GM12878 (cell line): ENCODE measurements at regions of chr2 and their contacts with region 1.

Region 1: GRCh38 chr2:177263451-177264208 is 897 bp downstream of the NFE2L2 start:
- DNase-seq: peak; percentile 71
- ATAC-seq: peak; percentile 74
- H3K4me3 ChIP-seq: peak overlapping the region; percentile 72
- H3K27ac ChIP-seq: peak overlapping the region; percentile 99
- H3K4me1 ChIP-seq: peaks cover 12% of the 10 kb centered on the region
- H3K27me3 ChIP-seq: no peaks in the 10 kb centered on the region
- CTCF ChIP-seq: peak; percentile 85 to 96 (median 86); a peak in 5 of 6 replicates
- EP300 ChIP-seq: peak; percentile 90 to 93
- POLR2A ChIP-seq: peak; percentile 81
- RAD21 ChIP-seq: peak; percentile 62

Region 2: DNA sequence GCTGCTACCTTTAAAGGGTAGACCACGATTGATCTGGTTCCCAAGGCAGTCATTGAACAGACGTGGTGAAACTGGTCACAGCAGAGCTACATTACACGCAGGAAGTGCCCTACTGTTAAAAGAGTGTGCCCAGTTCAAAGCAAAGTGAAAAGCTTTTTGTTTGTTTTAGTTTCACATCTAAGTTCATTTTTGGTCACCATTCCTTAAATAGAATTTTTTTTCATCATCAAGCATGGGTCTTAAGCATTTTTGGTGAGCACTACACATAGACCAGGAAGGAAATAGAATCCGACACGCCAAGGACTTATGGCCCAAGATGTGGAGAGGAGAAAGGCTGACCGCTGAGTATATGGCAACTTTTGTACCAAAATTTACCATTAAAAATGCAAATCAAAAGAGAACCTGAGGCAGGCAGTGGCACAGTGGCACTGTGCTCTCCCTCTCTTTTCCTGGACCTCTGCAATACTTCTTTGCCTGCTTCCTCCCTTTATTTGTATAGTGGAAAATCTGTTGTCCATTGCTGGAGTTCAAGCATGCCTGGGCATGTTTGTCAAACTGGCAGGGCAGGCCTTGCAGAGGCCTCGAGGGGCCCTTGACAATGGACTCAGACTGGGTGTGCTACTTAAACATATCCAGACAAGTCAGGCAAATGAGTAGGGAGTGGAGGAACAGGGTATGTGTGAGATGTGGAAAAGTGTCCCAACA is 93.7 kb before region 1 on chr2:
- CTCF ChIA-PET with region 1: interaction called, 213 read pairs
- POLR2A ChIA-PET with region 1: interaction called, 74 read pairs
- RAD21 ChIA-PET with region 1: interaction called, 166 read pairs
- SMC1A ChIA-PET with region 1: interaction called, 140 read pairs
- in situ Hi-C with region 1: no loop called
- intact Hi-C with region 1: no loop called
- DNase-seq: peak; percentile 82
- ATAC-seq: peak; percentile 81
- H3K4me3 ChIP-seq: peak overlapping the region; percentile 9; the same call in 1 of the 2 replicates
- H3K27ac ChIP-seq: peak overlapping the region; percentile 84
- H3K4me1 ChIP-seq: peaks cover 33% of the 10 kb centered on the region
- H3K27me3 ChIP-seq: no peaks in the 10 kb centered on the region
- CTCF ChIP-seq: no peak
- EP300 ChIP-seq: no peak; a peak in 2 of 4 replicates
- POLR2A ChIP-seq: no peak
- RAD21 ChIP-seq: no peak

Region 3: GRCh38 chr2:177212106-177212890 is 51.3 kb before region 1 on chr2 and contains the start of gene HNRNPA3:
- CTCF ChIA-PET with region 1: interaction called, 8 read pairs
- POLR2A ChIA-PET with region 1: interaction called, 31 read pairs
- RAD21 ChIA-PET with region 1: interaction called, 27 read pairs
- SMC1A ChIA-PET with region 1: interaction called, 9 read pairs
- in situ Hi-C with region 1: no loop called
- intact Hi-C with region 1: loop called (anchors 1 kb)
- DNase-seq: peak; percentile 95
- ATAC-seq: peak; percentile 88
- H3K4me3 ChIP-seq: peak within 1 kb of the TSS; percentile 95
- H3K27ac ChIP-seq: peak within 1 kb of the TSS; percentile 100
- H3K4me1 ChIP-seq: peaks cover 8% of the 10 kb centered on the region
- H3K27me3 ChIP-seq: no peaks in the 10 kb centered on the region
- CTCF ChIP-seq: peak in 2 of 3 experiments; percentile 16 to 20; a peak in 3 of 6 replicates
- EP300 ChIP-seq: peak in 1 of 2 experiments; percentile 43; a peak in 1 of 4 replicates
- POLR2A ChIP-seq: peak; percentile 46
- RAD21 ChIP-seq: no peak
- polyA plus RNA-seq, gene HNRNPA3: 221 to 285 TPM

Region 4: GRCh38 chr2:177275041-177276020 is 11.7 kb after region 1 on chr2:
- CTCF ChIA-PET with region 1: interaction called, 95 read pairs
- POLR2A ChIA-PET with region 1: interaction called, 8 read pairs
- RAD21 ChIA-PET with region 1: interaction called, 15 read pairs
- SMC1A ChIA-PET with region 1: interaction called, 94 read pairs
- in situ Hi-C with region 1: no loop called
- intact Hi-C with region 1: loop called (anchors 2 kb)
- DNase-seq: no peak
- ATAC-seq: no peak
- H3K4me3 ChIP-seq: no peak overlapping the region
- H3K27ac ChIP-seq: no peak overlapping the region
- H3K4me1 ChIP-seq: no peaks in the 10 kb centered on the region; the same call in 1 of the 2 replicates
- H3K27me3 ChIP-seq: no peaks in the 10 kb centered on the region
- CTCF ChIP-seq: no peak
- EP300 ChIP-seq: no peak
- POLR2A ChIP-seq: no peak
- RAD21 ChIP-seq: no peak

Region 5: DNA sequence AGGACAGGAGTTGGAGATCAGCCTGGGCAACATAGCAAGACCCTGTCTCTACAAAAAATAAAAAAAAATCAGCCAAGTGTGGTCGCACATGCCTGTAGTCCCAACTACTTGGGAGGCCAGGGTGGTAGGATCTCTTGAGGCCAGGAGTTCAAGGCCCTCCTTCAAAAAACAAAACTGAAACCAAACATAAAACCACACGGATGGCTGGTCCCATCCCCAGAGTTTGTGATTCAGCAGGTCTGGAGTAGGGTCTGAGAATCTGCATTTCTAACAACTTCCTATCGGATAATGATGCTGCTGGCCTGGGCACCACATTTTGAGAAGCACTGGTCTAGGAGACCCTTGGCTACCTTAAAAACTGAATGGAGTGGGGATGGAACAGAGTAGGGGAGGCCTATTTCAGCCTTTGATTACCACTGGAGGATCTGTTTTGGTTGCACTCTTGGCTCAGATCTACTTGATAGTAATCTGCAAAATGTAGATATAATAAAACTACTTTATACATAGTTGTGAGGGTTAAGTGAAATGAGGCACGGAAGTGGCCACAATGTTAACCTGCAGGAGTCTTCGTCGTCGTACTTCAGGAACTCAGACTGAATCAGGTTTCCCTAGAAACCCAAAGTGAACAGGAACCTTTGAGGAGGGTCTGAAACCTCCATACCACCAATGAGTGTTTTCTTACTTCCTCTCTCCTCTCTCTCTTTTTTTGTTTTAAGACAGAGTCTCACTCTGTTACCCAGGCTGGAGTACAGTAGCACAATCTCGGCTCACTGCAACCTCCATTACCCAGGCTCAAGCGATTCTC is 26.4 kb after region 1 on chr2:
- CTCF ChIA-PET with region 1: interaction called, 129 read pairs
- POLR2A ChIA-PET with region 1: interaction called, 76 read pairs
- RAD21 ChIA-PET with region 1: interaction called, 52 read pairs
- SMC1A ChIA-PET with region 1: interaction called, 94 read pairs
- in situ Hi-C with region 1: no loop called
- intact Hi-C with region 1: no loop called
- DNase-seq: peak; percentile 46
- ATAC-seq: peak; percentile 78
- H3K4me3 ChIP-seq: no peak overlapping the region
- H3K27ac ChIP-seq: peak overlapping the region; percentile 52
- H3K4me1 ChIP-seq: peaks cover 13% of the 10 kb centered on the region
- H3K27me3 ChIP-seq: no peaks in the 10 kb centered on the region
- CTCF ChIP-seq: no peak
- EP300 ChIP-seq: no peak
- POLR2A ChIP-seq: no peak
- RAD21 ChIP-seq: no peak

Region 6: GRCh38 chr2:177392373-177393202 is 129.0 kb after region 1 on chr2 and contains the start of gene AGPS:
- CTCF ChIA-PET with region 1: interaction called, 7 read pairs
- POLR2A ChIA-PET with region 1: no interaction called
- RAD21 ChIA-PET with region 1: interaction called, 5 read pairs
- SMC1A ChIA-PET with region 1: interaction called, 6 read pairs
- in situ Hi-C with region 1: no loop called
- intact Hi-C with region 1: loop called (anchors 10 kb)
- DNase-seq: peak; percentile 30
- ATAC-seq: peak; percentile 92
- H3K4me3 ChIP-seq: peak within 1 kb of the TSS; percentile 91
- H3K27ac ChIP-seq: peak within 1 kb of the TSS; percentile 66
- H3K4me1 ChIP-seq: peaks cover 20% of the 10 kb centered on the region
- H3K27me3 ChIP-seq: no peaks in the 10 kb centered on the region
- CTCF ChIP-seq: no peak
- EP300 ChIP-seq: no peak
- POLR2A ChIP-seq: peak; percentile 94
- RAD21 ChIP-seq: no peak
- polyA plus RNA-seq, gene AGPS: 7.9 to 11.1 TPM

Region 7: DNA sequence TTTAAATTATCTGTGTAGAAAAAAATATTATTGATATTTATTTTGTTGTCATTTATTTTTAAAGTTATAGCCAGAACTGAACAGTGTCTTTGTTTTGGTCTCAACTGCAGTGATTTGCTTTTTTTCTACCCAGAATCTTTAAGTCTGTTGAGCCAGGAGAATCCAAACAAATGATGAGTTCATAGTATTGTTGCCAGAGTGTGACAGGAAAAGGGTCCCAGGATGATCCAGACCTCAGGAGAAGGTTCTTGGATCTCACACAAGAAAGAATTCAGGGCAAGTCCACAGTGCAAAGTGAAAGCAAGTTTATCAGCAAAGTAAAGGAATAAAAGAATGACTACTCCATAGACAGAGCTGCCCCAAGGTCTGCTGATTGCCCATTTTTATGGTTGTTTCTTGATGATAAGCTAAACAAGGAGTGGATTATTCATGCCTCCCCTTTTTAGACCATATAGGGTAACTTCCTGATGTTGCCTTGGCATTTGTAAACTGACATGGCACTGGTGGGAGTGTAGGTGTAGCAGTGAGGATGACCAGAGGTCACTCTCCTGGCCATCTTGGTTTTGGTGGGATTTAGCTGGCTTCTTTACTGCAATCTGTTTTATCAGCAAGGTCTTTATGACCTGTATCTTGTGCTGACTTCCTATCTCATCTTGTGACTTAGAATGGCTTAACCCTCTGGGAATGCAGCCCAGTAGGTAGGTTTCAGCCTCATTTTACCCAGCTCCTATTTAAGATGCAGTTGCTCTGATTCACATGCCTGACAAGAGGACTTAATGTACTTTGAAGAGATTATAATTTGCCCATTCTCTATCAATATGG is 256.1 kb after region 1 on chr2:
- CTCF ChIA-PET with region 1: no interaction called
- POLR2A ChIA-PET with region 1: no interaction called
- RAD21 ChIA-PET with region 1: no interaction called
- SMC1A ChIA-PET with region 1: no interaction called
- in situ Hi-C with region 1: no loop called
- intact Hi-C with region 1: no loop called
- DNase-seq: no peak
- ATAC-seq: no peak
- H3K4me3 ChIP-seq: no peak overlapping the region
- H3K27ac ChIP-seq: no peak overlapping the region
- H3K4me1 ChIP-seq: no peaks in the 10 kb centered on the region
- H3K27me3 ChIP-seq: no peaks in the 10 kb centered on the region
- CTCF ChIP-seq: no peak
- EP300 ChIP-seq: no peak
- POLR2A ChIP-seq: no peak
- RAD21 ChIP-seq: no peak